ENCODE measurements at regions of chr2 and their contacts with region 1.

Region 1: GRCh38 chr2:10408649-10409579 is 39.2 kb downstream of the ODC1 start:
- DNase-seq: peak; percentile 90
- ATAC-seq: peak; percentile 68
- H3K4me3 ChIP-seq: peak overlapping the region; percentile 4 to 42 (median 10)
- H3K4me3 Mint-ChIP-seq: peak overlapping the region; percentile 86
- H3K27ac ChIP-seq: peak overlapping the region; percentile 68 to 77
- H3K27ac Mint-ChIP-seq: peak overlapping the region; percentile 86
- H3K4me1 ChIP-seq: peaks cover 54 to 76% of the 10 kb centered on the region in 2 donors
- H3K4me1 Mint-ChIP-seq: peaks cover 67% of the 10 kb centered on the region
- H3K27me3 ChIP-seq: no peaks in the 10 kb centered on the region
- H3K27me3 Mint-ChIP-seq: no peaks in the 10 kb centered on the region
- CTCF ChIP-seq: peak; percentile 93

Region 2: DNA sequence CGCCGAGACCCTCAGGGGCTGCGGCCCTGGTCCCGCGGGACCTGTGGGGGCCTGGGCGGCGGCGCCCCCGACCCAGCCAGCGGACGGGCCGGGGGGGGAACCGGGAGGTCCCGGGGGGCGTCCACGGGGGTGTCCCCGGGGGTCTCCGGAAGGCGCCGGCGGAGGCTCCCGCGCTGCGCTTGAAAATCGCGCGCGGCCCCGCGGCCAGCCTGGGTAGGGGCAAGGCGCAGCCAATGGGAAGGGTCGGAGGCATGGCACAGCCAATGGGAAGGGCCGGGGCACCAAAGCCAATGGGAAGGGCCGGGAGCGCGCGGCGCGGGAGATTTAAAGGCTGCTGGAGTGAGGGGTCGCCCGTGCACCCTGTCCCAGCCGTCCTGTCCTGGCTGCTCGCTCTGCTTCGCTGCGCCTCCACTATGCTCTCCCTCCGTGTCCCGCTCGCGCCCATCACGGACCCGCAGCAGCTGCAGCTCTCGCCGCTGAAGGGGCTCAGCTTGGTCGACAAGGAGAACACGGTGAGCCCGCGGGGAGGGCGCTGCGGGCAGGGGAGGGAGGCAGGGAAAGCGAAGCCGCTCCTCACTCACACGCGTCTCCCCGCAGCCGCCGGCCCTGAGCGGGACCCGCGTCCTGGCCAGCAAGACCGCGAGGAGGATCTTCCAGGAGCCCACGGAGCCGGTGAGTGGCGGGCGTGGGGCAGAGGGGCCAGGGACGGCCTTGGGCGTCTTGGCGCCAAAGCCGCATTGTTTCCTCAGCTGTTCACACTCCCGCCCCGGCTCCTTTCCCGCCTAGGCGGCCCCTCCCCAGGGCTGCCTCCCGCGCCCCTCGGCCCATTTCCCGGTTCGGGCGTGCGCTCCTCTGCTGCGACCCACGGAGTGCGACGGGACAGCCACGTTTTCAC is 286.3 kb before region 1 on chr2 and contains the start of gene RRM2:
- CTCF ChIA-PET with region 1: interaction called, 147 read pairs
- POLR2A ChIA-PET with region 1: interaction called, 10 read pairs
- intact Hi-C with region 1: loop called (anchors 1 kb)
- DNase-seq: peak; percentile 91
- ATAC-seq: peak; percentile 82
- H3K4me3 ChIP-seq: peak within 1 kb of the TSS in 4 of 5 experiments; percentile 42 to 77 (median 54)
- H3K4me3 Mint-ChIP-seq: peak within 1 kb of the TSS; percentile 98
- H3K27ac ChIP-seq: no peak within 1 kb of the TSS
- H3K27ac Mint-ChIP-seq: peak within 1 kb of the TSS; percentile 59
- H3K4me1 ChIP-seq: peaks cover 29 to 32% of the 10 kb centered on the region in 2 donors
- H3K4me1 Mint-ChIP-seq: peaks cover 30% of the 10 kb centered on the region
- H3K27me3 ChIP-seq: peaks cover 0 to 17% (median 8%) of the 10 kb centered on the region in 4 experiments
- H3K27me3 Mint-ChIP-seq: peaks cover 10% of the 10 kb centered on the region
- CTCF ChIP-seq: no peak
- total RNA-seq, gene RRM2: 1.2 and 1.3 TPM in 2 replicates

Region 3: DNA sequence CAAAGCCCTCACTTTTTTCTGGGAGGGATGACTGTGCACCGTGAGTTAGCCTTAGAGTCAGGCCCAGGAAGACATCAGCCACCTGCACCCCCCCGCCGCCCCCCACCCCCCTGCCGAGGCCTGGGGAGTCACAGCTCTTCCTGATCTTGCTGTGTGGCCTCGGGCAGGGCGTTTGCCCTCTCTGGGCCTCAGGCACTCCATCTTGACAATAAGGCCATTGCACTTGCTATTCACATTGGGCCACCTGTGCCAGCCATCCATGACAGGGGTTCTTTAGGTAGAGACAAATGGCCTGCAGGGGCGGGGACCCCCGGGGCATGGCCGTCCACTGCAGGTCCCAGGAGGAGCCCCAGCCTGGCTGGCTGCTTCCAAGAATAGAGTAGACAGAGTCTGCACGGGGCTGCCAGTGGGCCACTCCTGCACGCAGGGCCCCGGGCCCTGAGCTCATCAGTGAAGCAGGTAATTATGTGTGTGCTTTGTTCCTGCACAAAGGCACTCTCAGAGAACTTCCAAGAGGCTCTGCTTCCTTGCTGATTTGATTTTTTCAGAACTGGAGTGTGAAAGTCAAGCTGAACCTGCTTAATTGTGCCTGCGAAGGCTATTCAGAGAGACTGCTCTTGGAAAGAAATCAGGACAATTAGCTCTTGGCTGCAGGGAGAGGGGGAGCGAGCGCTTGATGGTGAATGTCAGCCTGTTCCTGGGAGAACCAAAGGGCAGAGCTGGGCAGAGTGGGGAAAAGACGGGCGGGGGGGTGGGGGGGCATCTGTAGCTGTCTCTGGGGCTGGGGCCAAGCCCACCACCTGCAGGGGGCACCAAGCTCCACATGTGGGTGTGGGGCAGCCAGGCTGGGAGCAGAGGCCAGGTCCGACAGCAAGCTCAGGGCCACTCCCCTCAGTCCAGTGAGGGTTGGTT is 246.1 kb before region 1 on chr2:
- CTCF ChIA-PET with region 1: interaction called, 15 read pairs
- POLR2A ChIA-PET with region 1: no interaction called
- intact Hi-C with region 1: no loop called
- DNase-seq: no peak
- ATAC-seq: no peak
- H3K4me3 ChIP-seq: no peak overlapping the region
- H3K4me3 Mint-ChIP-seq: no peak overlapping the region
- H3K27ac ChIP-seq: no peak overlapping the region
- H3K27ac Mint-ChIP-seq: no peak overlapping the region
- H3K4me1 ChIP-seq: peaks cover 9 to 15% of the 10 kb centered on the region in 2 donors
- H3K4me1 Mint-ChIP-seq: peaks cover 16% of the 10 kb centered on the region
- H3K27me3 ChIP-seq: no peaks in the 10 kb centered on the region
- H3K27me3 Mint-ChIP-seq: no peaks in the 10 kb centered on the region
- CTCF ChIP-seq: no peak

Region 4: DNA sequence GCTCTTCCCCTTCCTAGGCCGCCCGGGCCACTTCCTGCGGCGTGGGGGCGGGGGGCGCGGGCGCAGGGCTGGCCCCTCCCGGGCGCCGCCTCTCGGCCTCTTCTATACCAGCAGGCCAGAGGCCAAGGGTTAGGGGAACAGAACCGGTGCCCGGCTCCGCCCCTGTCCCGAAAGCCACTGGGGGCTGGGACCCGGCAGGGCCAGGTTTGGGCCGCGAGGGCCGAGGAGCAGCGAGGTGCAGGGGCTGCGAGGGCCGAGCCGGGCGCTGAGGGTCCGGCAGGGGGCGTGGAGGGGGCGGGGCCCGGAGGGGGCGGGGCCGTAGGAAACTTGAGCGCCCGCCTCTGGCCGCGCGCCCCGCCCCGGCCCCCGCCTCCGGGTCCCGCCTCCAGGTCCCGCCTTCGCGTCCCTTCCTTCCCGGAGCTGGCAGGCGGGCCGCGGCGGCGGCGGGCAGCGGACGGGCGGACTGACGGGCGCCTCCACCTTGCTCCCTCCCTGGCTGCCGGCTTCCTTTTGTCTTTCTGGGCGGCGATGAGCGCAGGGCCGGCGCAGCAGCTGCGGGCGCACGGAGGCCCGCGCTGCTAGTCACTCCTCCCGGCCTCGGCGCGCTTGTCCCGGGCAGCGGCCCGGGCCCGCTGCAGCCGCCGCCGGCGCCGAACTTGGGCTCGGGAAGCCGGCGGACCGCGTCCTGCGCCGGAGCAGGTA is 106.3 kb before region 1 on chr2 and contains the start of gene HPCAL1:
- CTCF ChIA-PET with region 1: interaction called, 162 read pairs
- POLR2A ChIA-PET with region 1: interaction called, 62 read pairs
- intact Hi-C with region 1: loop called (anchors 1 kb)
- DNase-seq: peak; percentile 90
- ATAC-seq: peak; percentile 81
- H3K4me3 ChIP-seq: peak within 1 kb of the TSS; percentile 67 to 78 (median 76)
- H3K4me3 Mint-ChIP-seq: peak within 1 kb of the TSS; percentile 99
- H3K27ac ChIP-seq: peak within 1 kb of the TSS; percentile 71 to 77
- H3K27ac Mint-ChIP-seq: peak within 1 kb of the TSS; percentile 88
- H3K4me1 ChIP-seq: peaks cover 39 to 51% of the 10 kb centered on the region in 2 donors
- H3K4me1 Mint-ChIP-seq: peaks cover 60% of the 10 kb centered on the region
- H3K27me3 ChIP-seq: no peaks in the 10 kb centered on the region
- H3K27me3 Mint-ChIP-seq: no peaks in the 10 kb centered on the region
- CTCF ChIP-seq: peak; percentile 80
- total RNA-seq, gene HPCAL1: 60.3 and 64.1 TPM in 2 replicates

Region 5: GRCh38 chr2:10344105-10345066 is 64.5 kb before region 1 on chr2:
- CTCF ChIA-PET with region 1: interaction called, 15 read pairs
- POLR2A ChIA-PET with region 1: no interaction called
- intact Hi-C with region 1: no loop called
- DNase-seq: no peak
- ATAC-seq: no peak
- H3K4me3 ChIP-seq: no peak overlapping the region
- H3K4me3 Mint-ChIP-seq: no peak overlapping the region
- H3K27ac ChIP-seq: no peak overlapping the region
- H3K27ac Mint-ChIP-seq: no peak overlapping the region
- H3K4me1 ChIP-seq: peaks cover 19 to 51% of the 10 kb centered on the region in 2 donors
- H3K4me1 Mint-ChIP-seq: peaks cover 54% of the 10 kb centered on the region
- H3K27me3 ChIP-seq: no peaks in the 10 kb centered on the region
- H3K27me3 Mint-ChIP-seq: no peaks in the 10 kb centered on the region
- CTCF ChIP-seq: no peak

Region 6: GRCh38 chr2:10382354-10383061 is 26.4 kb before region 1 on chr2:
- CTCF ChIA-PET with region 1: interaction called, 178 read pairs
- POLR2A ChIA-PET with region 1: interaction called, 72 read pairs
- intact Hi-C with region 1: loop called (anchors 1 kb)
- DNase-seq: peak; percentile 82
- ATAC-seq: peak; percentile 69
- H3K4me3 ChIP-seq: peak overlapping the region; percentile 12 to 68 (median 49)
- H3K4me3 Mint-ChIP-seq: peak overlapping the region; percentile 64
- H3K27ac ChIP-seq: peak overlapping the region; percentile 68 to 76
- H3K27ac Mint-ChIP-seq: peak overlapping the region; percentile 81
- H3K4me1 ChIP-seq: peaks cover 67 to 96% of the 10 kb centered on the region in 2 donors
- H3K4me1 Mint-ChIP-seq: peaks cover 86% of the 10 kb centered on the region
- H3K27me3 ChIP-seq: no peaks in the 10 kb centered on the region
- H3K27me3 Mint-ChIP-seq: no peaks in the 10 kb centered on the region
- CTCF ChIP-seq: no peak

Region 7: DNA sequence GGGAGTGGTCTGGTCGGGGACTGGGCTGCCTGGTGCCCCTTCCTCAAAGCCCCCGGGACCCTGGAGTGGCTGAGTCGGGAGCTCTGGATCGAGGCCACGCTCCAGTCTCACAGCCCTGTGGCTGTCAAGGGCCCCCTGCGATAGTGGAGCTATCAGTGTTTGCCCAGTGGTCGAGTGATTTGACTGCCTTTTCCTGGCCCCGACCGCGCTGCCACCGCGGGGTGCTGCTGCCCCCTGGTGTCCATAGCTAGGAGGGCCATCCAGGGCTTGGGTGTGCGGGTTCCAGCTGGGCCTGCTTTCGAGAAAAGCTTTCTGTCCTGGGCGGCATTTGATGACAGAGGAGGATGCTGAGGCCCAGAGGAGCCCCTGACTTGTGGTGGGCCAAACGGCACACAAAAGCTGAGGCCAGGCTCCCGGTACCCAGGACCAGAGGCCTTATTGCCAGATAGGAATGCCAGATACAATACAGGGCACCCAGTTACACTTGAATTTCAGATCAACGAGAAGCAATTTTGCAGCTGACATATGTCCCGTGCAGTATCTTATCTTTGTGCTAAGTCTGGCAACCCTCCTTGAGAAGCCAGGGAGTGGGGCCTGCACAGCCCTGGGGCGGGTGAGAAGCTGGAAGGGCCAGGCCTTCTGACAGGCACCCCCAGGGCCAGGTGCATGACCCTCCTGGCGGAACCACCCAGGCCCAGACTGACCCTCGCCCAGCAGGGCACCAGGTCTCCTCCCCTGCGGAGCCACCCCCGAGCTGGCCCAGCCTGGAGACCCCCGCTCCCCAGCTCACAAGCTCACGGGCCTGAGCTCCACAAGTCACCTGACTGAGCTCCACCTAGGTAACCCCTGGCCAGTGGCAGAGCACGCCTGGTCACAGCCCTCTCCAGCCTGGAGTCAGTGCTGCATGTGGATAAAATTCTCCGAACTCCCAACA is 26.2 kb after region 1 on chr2:
- CTCF ChIA-PET with region 1: interaction called, 207 read pairs
- POLR2A ChIA-PET with region 1: interaction called, 6 read pairs
- intact Hi-C with region 1: loop called (anchors 1 kb)
- DNase-seq: peak; percentile 88
- ATAC-seq: peak; percentile 79
- H3K4me3 ChIP-seq: no peak overlapping the region
- H3K4me3 Mint-ChIP-seq: no peak overlapping the region
- H3K27ac ChIP-seq: no peak overlapping the region
- H3K27ac Mint-ChIP-seq: peak overlapping the region; percentile 74
- H3K4me1 ChIP-seq: peaks cover 12 to 18% of the 10 kb centered on the region in 2 donors
- H3K4me1 Mint-ChIP-seq: peaks cover 19% of the 10 kb centered on the region
- H3K27me3 ChIP-seq: peaks cover 0 to 4% (median 0%) of the 10 kb centered on the region in 4 experiments
- H3K27me3 Mint-ChIP-seq: no peaks in the 10 kb centered on the region
- CTCF ChIP-seq: peak; percentile 93

Measured in B cell (primary cell).